Right ventricle myocardium inferior (tissue), 1 donor: ENCODE measurements at regions of chr11 and their contacts with region 1.

Region 1: GRCh38 chr11:117232092-117232878 is at the start of gene RNF214:
- DNase-seq: peak; percentile 86
- ATAC-seq: peak; percentile 90
- total RNA-seq, gene RNF214: 17.3 TPM

Region 2: GRCh38 chr11:116772443-116773202 is 459.7 kb before region 1 on chr11 and contains the start of gene BUD13:
- intact Hi-C with region 1: loop called (anchors 5 kb)
- DNase-seq: peak; percentile 95
- ATAC-seq: peak; percentile 96
- total RNA-seq, gene BUD13: 7.8 TPM

Region 3: GRCh38 chr11:117178210-117179034 is 53.9 kb before region 1 on chr11 and contains the start of gene SIDT2:
- intact Hi-C with region 1: loop called (anchors 5 kb)
- DNase-seq: peak; percentile 97
- ATAC-seq: peak; percentile 95
- total RNA-seq, gene SIDT2: 26.1 TPM

Region 4: DNA sequence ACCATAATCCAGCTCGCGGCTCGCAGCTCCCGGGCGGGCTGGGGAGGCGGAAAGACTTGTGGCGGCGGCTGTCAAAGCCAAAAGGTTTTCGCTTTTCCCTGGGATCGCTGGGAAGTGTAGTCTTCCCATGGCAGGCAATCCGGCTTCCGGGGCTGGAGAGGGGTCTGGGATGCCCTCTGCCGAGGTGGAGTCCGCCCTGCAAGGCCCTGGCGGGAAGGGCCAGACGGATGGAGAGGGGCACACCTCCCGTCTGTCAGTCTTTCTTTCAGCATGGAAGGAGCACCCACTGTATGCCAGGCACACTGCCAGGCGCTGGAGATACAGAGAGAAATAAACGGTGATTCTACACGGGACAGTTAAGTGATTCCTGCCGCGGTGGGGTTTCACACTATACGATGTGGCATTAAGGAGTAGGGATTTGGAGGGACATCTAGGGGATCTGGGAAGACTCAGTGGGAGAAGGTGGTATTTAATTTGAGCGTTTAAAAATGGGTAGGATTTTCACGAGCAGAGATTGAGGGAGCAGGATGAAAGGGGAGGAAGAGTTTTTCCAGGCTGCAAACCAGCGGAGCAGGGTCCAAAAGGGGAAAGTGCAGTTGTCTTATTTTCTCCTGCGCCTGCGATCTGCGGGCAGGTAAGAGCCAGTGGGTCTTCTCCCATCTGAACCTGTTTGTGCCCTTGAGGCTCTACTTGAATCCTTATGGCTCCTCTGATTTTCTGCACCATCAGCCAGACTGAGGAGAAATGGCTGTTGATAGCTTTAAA is 84.1 kb after region 1 on chr11 and contains the start of gene BACE1:
- intact Hi-C with region 1: loop called (anchors 5 kb)
- DNase-seq: peak; percentile 85
- ATAC-seq: peak; percentile 97
- total RNA-seq, gene BACE1: 10.7 TPM

Region 5: DNA sequence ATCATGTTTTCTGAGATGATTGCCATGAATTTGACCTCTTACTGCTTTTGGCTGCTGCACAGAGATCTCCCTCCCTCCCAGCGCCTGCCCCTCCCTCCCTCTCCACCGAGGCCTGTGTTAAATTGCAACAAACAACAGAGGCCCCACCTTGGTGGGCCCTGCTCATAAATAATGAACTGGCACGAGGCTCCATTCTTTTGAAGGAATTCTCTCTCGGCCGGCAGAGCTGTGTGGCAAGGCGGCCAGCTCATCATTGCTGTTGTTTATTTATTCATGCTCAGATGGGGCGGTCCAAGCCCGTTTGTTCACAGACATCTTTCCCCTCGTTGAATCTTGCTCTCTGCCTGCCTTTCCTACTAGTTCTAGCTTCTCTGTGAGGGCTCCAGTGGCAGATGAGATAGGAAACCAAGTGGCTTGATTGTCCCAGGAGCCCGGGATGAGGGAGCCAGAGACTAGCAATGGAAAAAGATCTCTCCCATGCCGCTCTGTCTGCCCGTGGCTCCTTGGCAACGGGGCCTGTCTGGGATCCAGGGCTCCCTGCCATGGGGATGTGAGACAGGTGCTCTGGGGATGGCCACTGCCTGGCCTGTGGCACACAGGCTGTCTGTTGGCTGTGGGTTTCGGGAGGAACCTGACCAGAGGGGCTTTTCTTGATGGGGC is 372.2 kb after region 1 on chr11:
- intact Hi-C with region 1: no loop called
- DNase-seq: no peak
- ATAC-seq: no peak